Activated T-helper 2 cell treated with anti-CD3 and anti-CD28 coated beads, Interferon-gamma antibody, Interleukin-2, Interleukin-4, amounts not matched to agents 10 μg/mL and 5 μg/mL and 100 μg/mL, durations not matched to agents 14 hours and 24 hours and 36 hours (primary cell): ENCODE measurements at regions of chr2 and their contacts with region 1.

Region 1: GRCh38 chr2:44087036-44087713 is 81.5 kb upstream of the PPM1B start:
- DNase-seq: peak; percentile 74
- H3K4me3 Mint-ChIP-seq: peak overlapping the region; percentile 74
- H3K27ac Mint-ChIP-seq: peak overlapping the region; percentile 86
- H3K4me1 Mint-ChIP-seq: peaks cover 25% of the 10 kb centered on the region
- H3K27me3 Mint-ChIP-seq: no peaks in the 10 kb centered on the region

Region 2: DNA sequence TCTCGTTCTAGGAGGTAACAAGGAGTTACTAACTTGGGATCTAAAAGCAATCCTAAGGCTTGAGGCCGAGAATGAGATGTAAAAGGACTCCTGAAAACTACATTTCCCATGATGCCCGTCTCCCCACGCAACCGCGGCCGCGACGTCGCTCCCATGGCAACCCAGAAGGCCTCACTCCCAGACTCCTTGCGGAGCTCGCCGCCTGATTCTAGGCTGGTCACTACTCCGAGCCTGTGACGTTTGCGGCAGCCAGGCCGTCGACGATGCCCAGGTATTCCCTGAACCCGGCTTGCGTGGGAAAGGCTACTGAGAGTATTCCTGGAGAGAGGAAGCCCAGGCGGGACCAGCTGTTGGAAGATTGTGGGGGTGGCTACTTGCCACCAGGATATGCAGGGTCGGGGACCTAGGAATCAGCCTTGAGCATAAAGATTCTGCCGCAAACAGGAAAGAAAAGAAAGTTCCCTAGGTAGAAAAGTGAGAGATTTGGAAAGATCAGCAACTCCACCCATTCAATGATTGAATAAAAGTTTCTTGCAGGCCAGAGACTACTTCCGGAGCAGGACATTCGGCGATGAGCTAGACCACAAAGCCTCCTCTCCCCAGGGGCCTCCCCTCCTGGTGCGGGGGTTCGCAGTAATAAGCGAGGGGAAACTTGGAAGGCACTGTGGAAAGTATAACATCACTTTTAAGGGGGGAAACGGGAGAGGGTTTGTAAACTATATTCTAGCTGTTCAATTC is 313.1 kb before region 1 on chr2 and contains the start of gene DYNC2LI1:
- intact Hi-C with region 1: no loop called
- DNase-seq: peak; percentile 74
- H3K4me3 Mint-ChIP-seq: peak within 1 kb of the TSS; percentile 86
- H3K27ac Mint-ChIP-seq: peak within 1 kb of the TSS; percentile 95
- H3K4me1 Mint-ChIP-seq: peaks cover 31% of the 10 kb centered on the region
- H3K27me3 Mint-ChIP-seq: no peaks in the 10 kb centered on the region
- total RNA-seq, gene DYNC2LI1: 67.7 and 71.6 TPM in 2 replicates

Region 3: GRCh38 chr2:44016282-44016681 is 70.9 kb before region 1 on chr2:
- intact Hi-C with region 1: no loop called
- DNase-seq: peak; percentile 16
- H3K4me3 Mint-ChIP-seq: no peak overlapping the region
- H3K27ac Mint-ChIP-seq: no peak overlapping the region
- H3K4me1 Mint-ChIP-seq: no peaks in the 10 kb centered on the region
- H3K27me3 Mint-ChIP-seq: peaks cover 7% of the 10 kb centered on the region

Region 4: DNA sequence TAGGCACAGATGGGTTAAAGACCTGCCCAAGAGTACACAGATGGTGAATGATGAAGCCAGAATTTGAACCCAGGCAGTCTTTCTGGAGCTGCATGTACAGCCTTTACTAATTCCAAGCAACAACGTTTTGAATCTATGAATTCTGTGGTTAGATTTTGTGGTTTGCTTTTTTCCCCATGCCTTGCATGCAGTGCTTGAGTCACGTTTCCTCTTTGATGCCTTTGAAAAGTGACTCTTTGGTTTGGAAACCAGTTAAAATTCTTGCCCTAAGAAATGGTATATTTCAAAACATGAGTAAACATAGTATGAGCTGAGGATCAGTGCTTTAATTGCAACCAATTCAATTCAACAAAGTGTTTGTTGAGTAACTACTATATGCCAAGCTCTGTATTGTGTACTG is 33.3 kb after region 1 on chr2:
- intact Hi-C with region 1: loop called (anchors 2 kb)
- DNase-seq: peak; percentile 31
- H3K4me3 Mint-ChIP-seq: no peak overlapping the region
- H3K27ac Mint-ChIP-seq: peak overlapping the region; percentile 33
- H3K4me1 Mint-ChIP-seq: peaks cover 32% of the 10 kb centered on the region
- H3K27me3 Mint-ChIP-seq: no peaks in the 10 kb centered on the region

Region 5: GRCh38 chr2:44244129-44244871 is 157.1 kb after region 1 on chr2:
- intact Hi-C with region 1: loop called (anchors 1 kb)
- DNase-seq: peak; percentile 36
- H3K4me3 Mint-ChIP-seq: peak overlapping the region; percentile 55
- H3K27ac Mint-ChIP-seq: no peak overlapping the region
- H3K4me1 Mint-ChIP-seq: peaks cover 5% of the 10 kb centered on the region
- H3K27me3 Mint-ChIP-seq: no peaks in the 10 kb centered on the region

Region 6: GRCh38 chr2:44342854-44343253 is 255.7 kb after region 1 on chr2:
- intact Hi-C with region 1: loop called (anchors 5 kb)
- DNase-seq: no peak
- H3K4me3 Mint-ChIP-seq: no peak overlapping the region
- H3K27ac Mint-ChIP-seq: no peak overlapping the region
- H3K4me1 Mint-ChIP-seq: no peaks in the 10 kb centered on the region
- H3K27me3 Mint-ChIP-seq: no peaks in the 10 kb centered on the region

Region 7: GRCh38 chr2:44479122-44479887 is 392.1 kb after region 1 on chr2:
- intact Hi-C with region 1: loop called (anchors 2 kb)
- DNase-seq: peak; percentile 29
- H3K4me3 Mint-ChIP-seq: no peak overlapping the region
- H3K27ac Mint-ChIP-seq: no peak overlapping the region
- H3K4me1 Mint-ChIP-seq: peaks cover 4% of the 10 kb centered on the region
- H3K27me3 Mint-ChIP-seq: no peaks in the 10 kb centered on the region